ENCODE measurements at regions of chr18 and their contacts with region 1.

Region 1: DNA sequence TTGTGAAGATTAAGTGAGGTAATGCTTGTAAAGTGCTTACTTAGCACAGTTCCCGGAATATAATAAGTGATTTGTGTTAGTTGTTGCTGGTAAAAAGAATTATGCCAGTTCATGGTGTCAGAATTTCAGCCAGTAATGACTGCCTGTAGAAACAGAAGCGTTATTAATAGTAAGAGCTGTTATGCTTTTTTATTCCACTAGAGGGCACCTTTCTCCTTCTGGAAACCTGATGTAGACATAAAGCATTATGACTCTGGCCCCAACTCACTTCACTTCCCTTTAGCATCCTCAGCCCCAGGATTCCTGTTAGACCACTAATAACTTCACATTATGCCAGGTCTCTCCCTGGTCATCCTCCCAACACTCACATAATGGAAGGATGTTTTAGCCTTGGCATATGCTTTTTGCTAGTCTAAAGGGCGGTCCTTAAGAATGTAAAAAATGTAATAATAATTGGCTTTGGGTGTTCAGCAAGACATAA is 34.9 kb downstream of the C18orf54 start:
- DNase-seq: peak; percentile 8
- H3K4me3 Mint-ChIP-seq: no peak overlapping the region
- H3K27ac Mint-ChIP-seq: no peak overlapping the region
- H3K4me1 Mint-ChIP-seq: peaks cover 26% of the 10 kb centered on the region
- H3K27me3 Mint-ChIP-seq: no peaks in the 10 kb centered on the region
- CTCF ChIP-seq: peak; percentile 43

Region 2: DNA sequence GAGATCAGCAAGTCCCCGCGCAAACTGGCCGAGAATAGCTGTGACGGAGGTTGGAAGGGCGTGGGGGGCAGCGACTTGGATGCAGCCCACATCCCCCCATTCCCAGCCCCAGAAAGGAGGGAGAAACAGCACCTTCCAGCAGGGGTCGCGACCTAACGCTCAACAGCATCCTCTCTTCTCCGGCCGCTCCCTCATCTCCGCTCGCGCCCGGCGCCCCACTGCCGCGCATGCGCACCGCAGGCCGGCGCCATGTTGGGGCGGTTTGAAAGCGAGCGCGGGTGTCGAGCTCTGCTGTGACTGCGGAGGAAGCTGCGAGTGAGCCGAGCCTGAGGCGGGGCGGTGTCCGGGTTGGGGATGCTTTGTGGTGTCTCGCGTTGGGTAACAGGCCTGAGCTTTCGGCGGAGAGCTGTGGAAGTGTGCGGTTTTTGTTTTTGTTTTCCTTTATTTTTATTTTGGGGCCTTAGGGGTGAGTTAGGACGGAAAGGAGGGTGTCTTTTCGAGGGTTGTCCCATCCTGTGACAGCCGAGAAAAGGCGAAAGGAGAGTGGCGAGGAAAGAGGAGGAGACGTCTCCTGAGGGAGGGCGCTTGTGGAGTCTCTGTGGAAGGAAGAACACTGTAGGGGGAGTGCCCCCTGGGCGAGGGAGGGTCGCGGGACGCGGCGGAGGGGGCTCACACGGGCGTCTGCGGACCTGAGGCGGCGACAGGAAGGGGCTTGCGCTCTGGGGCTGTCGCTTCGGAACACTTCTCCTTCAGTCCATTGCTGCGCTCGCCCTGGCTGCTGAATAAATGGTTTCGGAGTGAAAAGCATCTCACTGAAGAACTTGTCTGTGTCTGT is 34.7 kb before region 1 on chr18 and contains the starts of genes C18orf54 and STARD6:
- CTCF ChIA-PET with region 1: interaction called, 6 read pairs
- intact Hi-C with region 1: loop called (anchors 2 kb)
- DNase-seq: peak; percentile 86
- H3K4me3 Mint-ChIP-seq: peak within 1 kb of the TSS; percentile 83
- H3K27ac Mint-ChIP-seq: peak within 1 kb of the TSS; percentile 63
- H3K4me1 Mint-ChIP-seq: no peaks in the 10 kb centered on the region
- H3K27me3 Mint-ChIP-seq: no peaks in the 10 kb centered on the region
- CTCF ChIP-seq: peak; percentile 39
- total RNA-seq, gene C18orf54: 9.3 and 9.7 TPM in 2 replicates
- total RNA-seq, gene STARD6: not detected in 2 replicates

Region 3: DNA sequence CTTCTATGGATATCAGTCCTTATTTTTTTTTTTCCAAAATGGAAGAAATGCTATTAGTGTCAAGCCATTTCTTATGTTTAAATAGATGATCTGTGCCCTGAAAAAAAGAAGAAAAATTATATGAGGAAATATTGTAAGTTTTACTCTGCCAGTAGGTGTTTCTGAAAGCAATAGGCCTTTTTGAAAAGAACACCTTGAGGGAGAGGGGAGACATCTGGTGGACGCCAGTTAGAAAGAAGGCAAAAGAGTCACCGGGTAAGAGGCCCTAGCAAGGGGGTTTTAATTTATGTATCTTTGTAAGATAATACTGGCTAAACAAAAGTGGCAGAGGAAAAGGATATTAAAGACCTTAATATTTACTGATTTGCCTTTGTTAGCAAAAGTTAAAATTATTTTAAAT is 254.6 kb after region 1 on chr18:
- CTCF ChIA-PET with region 1: no interaction called
- intact Hi-C with region 1: loop called (anchors 5 kb)
- DNase-seq: peak; percentile 48
- H3K4me3 Mint-ChIP-seq: no peak overlapping the region
- H3K27ac Mint-ChIP-seq: peak overlapping the region; percentile 4
- H3K4me1 Mint-ChIP-seq: no peaks in the 10 kb centered on the region
- H3K27me3 Mint-ChIP-seq: no peaks in the 10 kb centered on the region
- CTCF ChIP-seq: peak; percentile 56

Region 4: GRCh38 chr18:54671291-54671881 is 278.8 kb after region 1 on chr18:
- CTCF ChIA-PET with region 1: no interaction called
- intact Hi-C with region 1: loop called (anchors 5 kb)
- DNase-seq: peak; percentile 26
- H3K4me3 Mint-ChIP-seq: no peak overlapping the region
- H3K27ac Mint-ChIP-seq: no peak overlapping the region
- H3K4me1 Mint-ChIP-seq: peaks cover 11% of the 10 kb centered on the region
- H3K27me3 Mint-ChIP-seq: no peaks in the 10 kb centered on the region
- CTCF ChIP-seq: peak; percentile 55

Measured in Calu3 (cell line).